ENCODE measurements at regions of chr11 and their contacts with region 1.

Region 1: DNA sequence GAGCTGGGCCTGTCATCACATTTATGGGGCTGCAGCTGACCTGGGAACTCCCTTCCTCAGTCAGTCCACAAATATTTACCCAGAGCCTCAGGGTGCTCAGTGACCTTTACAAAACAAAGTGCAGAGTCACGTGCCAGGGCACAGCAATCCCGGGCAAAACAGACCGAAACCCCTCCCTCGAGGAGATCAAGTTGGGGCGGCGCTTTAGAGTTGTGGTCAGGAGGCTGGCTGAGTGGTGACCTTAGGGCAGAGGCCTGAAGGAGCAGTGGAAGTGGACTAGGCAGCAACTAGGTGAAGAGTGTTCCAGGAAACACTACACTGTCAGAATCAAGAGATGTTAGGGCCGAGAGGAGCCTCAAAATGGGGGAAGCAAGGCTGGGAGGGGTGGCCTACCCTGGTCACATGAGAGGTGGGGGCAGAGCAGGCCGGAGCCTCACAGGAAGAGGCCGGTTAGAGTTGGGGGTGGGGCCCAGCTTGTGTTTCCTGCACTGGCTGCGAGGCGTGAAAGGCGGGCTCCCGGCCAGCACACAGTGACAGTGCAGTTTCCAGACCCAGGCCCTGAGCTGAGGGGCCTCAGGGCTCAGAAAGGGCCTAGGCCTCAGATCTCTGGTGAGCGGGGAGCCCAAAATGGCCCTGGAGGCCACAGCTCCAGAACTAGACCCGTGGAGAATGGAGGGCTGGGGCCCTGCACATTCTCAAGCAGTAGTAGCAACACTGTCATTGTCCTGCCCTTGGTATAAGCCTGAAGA is 3.7 kb upstream of the NEAT1 start:
- DNase-seq: peak; percentile 85 to 97 (median 92)

Region 2: GRCh38 chr11:65261591-65262380 is 157.1 kb before region 1 on chr11 and contains the start of gene POLA2:
- intact Hi-C with region 1: no loop called
- DNase-seq: peak; percentile 81 to 96 (median 92)

Region 3: GRCh38 chr11:65314501-65315203 is 104.2 kb before region 1 on chr11 and contains the start of gene CDC42EP2:
- intact Hi-C with region 1: no loop called
- DNase-seq: peak; percentile 75 to 96 (median 92)

Region 4: DNA sequence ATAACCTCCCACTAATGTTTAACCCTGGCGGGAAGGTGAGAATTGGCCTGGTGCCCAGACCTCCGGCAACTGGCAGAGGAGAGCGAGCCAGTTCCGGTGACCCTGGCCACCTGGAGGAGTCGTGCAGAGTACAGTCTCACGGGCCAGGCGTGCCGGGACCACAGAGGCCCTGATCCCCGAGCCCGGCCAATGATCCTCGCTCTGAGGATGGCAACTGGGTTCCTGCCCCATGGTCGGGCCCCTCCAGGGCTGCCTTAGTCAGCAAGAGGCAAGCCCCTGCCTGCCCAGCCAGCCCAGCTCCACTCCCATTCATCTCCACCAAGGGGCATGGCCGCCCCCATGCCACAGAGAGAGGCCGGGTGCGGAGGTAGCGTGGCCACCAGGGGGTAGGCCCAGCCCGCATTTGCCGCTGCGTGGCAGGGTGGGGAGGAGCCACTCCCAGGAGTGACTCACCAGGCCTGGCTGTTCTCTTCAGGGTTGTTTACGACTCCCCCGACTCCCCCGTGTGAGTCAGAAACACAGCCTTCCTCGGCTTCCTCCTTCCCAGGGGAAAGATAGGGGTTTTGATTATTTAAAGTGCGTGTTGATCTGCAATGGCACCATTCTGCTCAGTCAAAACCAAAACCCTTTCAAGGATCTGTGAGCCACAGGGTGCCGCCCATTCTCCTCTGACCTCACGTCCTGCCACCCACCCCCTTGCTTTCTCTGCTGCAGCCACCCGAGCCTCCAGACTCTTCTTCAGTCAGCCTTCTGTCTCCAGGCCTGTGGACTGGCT is 36.7 kb before region 1 on chr11 and contains the start of gene SLC25A45:
- intact Hi-C with region 1: loop called (anchors 5 kb)
- DNase-seq: peak; percentile 78 to 98 (median 92)

Region 5: DNA sequence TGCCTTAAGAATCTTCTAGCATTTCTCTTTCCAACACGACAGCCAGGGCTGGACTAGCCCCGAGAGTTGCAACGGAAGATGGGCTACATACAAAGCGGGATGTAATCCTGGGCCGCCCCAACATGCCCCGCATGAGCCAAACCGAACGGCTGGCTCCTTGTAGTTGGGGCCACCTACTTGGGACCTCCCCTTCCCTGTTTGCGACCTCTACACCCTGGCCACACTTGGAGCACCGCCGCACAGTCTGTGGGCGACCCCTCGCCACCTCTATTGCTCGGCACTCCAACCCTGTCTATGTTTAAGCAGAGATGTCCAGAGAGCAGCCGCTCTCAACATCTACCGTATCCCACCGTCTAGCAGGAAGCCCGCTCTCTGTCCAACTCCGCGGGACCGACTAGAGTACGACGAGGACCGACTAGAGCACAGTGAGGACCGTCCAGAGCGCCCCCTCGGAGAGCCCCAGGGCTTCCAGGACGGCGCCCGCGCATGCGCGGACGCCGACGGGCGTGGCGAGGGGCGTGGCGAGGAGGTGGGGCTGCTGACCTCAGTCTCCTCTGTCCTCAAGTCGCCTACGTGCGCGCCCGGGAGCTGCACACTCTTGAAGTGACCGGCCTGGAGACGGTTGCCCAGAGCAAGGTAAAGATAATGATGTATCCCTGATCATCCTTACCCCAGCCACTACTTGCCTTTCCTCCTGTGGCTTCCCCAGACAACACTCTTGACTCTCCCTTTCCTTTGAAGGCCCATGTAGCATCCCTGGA is 36.0 kb after region 1 on chr11:
- intact Hi-C with region 1: no loop called
- DNase-seq: peak; percentile 82 to 96 (median 91)

Region 6: DNA sequence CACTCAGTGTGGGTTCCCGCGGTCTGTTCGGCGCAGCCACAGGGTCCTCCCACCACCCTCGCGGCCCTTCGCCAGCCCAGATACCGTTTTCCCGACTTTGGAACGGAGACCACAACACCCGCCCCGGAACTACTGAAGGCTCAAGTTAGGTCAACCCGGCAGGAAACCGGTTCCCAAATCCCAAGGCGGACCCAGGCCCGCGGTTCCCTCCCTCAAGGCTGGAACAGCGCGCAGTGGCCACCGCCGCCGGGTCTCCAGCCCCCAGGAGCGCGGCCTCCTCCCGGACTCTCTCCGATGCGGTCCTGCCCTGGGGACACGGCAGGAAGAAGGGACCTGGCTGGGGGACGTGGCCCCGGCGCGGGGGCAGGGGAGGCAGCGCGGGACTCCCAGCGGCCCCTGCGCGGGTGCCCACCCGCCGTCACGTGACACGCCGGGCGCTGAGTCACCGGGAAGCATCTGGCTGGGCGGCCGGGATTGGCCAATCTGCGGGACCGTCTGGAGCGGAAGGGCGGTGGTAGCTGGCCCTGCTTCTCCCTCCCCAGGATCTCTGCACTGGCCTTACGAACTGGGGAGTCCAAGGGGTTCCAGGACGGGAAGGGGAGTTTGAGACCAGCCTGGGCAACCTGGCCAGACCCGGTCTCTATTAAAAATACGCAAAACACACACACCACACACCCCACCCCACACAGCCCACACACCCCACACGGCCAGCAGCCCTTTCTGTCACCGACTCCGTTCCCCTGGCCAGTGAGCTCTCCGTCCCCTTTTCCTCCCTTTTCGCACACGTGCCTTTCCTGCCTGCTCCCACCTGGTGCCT is 58.5 kb after region 1 on chr11:
- intact Hi-C with region 1: loop called (anchors 5 kb)
- DNase-seq: peak; percentile 90 to 99 (median 96)

Region 7: GRCh38 chr11:65497141-65498041 is 78.5 kb after region 1 on chr11:
- intact Hi-C with region 1: loop called (anchors 5 kb)
- DNase-seq: peak; percentile 95 to 99 (median 98)

Region 8: GRCh38 chr11:65506770-65507505 is 88.1 kb after region 1 on chr11:
- intact Hi-C with region 1: loop called (anchors 5 kb)
- DNase-seq: peak in 21 of 42 donors; percentile 30 to 87 (median 56)

Region 9: GRCh38 chr11:65546217-65546958 is 127.5 kb after region 1 on chr11:
- intact Hi-C with region 1: no loop called
- DNase-seq: peak in 41 of 42 donors; percentile 45 to 84 (median 71)

Measured in head of caudate nucleus (tissue), 42 donors.